ENCODE measurements at regions of chr9 and their contacts with region 1.

Region 1: GRCh38 chr9:20622330-20623020 is at the start of gene MLLT3:
- DNase-seq: peak; percentile 96 to 97 (median 97)
- H3K4me3 ChIP-seq: peak within 1 kb of the TSS; percentile 84 to 99 (median 97)
- H3K27ac ChIP-seq: peak within 1 kb of the TSS in 1 of 2 experiments; percentile 73
- H3K4me1 ChIP-seq: peaks cover 11 to 41% (median 33%) of the 10 kb centered on the region in 4 experiments
- H3K27me3 ChIP-seq: no peaks in the 10 kb centered on the region

Region 2: DNA sequence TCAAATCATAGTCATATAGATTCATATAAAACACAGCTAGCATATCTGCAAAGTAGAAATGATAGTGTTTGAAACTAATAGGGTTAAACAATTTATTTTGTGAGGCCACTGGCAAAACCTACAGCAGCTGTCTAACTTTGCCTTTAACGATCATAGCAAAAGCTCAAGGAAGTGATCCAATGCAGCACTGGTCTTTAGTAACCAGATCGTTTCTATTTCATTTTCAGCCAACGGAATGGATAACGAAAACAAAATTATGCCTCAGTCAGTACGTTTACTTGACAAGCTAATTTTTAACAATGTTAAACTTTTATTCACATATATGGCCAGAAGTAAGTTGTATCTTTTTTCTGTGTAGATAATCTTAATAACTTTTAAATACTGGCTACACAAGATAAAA is 17.9 kb before region 1 on chr9:
- CTCF ChIA-PET with region 1: interaction called, 10 read pairs
- POLR2A ChIA-PET with region 1: interaction called, 5 read pairs
- DNase-seq: peak; percentile 31 to 62 (median 54)
- H3K4me3 ChIP-seq: peak overlapping the region in 6 of 7 experiments; percentile 24 to 74 (median 48)
- H3K27ac ChIP-seq: peak overlapping the region; percentile 56 to 75
- H3K4me1 ChIP-seq: peaks cover 6 to 56% (median 26%) of the 10 kb centered on the region in 4 experiments
- H3K27me3 ChIP-seq: no peaks in the 10 kb centered on the region

Region 3: GRCh38 chr9:20611751-20612287 is 10.7 kb before region 1 on chr9:
- CTCF ChIA-PET with region 1: interaction called, 20 read pairs
- POLR2A ChIA-PET with region 1: interaction called, 5 read pairs
- DNase-seq: peak; percentile 38 to 72 (median 65)
- H3K4me3 ChIP-seq: no peak overlapping the region
- H3K27ac ChIP-seq: no peak overlapping the region
- H3K4me1 ChIP-seq: peaks cover 0 to 33% (median 9%) of the 10 kb centered on the region in 4 experiments
- H3K27me3 ChIP-seq: no peaks in the 10 kb centered on the region

Region 4: DNA sequence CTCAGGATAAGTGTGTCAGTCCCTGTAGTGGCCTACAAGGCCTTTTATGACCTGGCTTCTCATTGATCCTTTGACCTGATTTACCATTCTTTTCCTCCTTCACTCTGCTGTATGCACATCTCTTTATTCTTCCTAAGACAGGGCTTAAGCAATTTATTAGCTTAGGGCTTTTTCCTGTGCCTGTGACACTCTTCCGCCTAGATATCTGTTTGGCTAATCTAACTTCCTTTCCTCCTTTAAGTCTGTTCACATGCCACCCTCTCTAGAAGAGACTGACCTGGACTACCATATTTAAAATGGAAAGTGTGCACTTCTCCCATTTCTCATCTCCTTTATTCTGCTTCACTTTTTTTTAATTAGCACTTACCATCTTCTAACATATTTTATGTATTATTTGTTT is 90.7 kb after region 1 on chr9:
- CTCF ChIA-PET with region 1: no interaction called
- POLR2A ChIA-PET with region 1: no interaction called
- DNase-seq: no peak
- H3K4me3 ChIP-seq: no peak overlapping the region
- H3K27ac ChIP-seq: no peak overlapping the region
- H3K4me1 ChIP-seq: peaks cover 0 to 3% (median 0%) of the 10 kb centered on the region in 4 experiments
- H3K27me3 ChIP-seq: no peaks in the 10 kb centered on the region